Activated CD4-positive, alpha-beta T cell treated with anti-CD3 and anti-CD28 coated beads for 36 hours (primary cell): ENCODE measurements at regions of chrX and their contacts with region 1.

Region 1: DNA sequence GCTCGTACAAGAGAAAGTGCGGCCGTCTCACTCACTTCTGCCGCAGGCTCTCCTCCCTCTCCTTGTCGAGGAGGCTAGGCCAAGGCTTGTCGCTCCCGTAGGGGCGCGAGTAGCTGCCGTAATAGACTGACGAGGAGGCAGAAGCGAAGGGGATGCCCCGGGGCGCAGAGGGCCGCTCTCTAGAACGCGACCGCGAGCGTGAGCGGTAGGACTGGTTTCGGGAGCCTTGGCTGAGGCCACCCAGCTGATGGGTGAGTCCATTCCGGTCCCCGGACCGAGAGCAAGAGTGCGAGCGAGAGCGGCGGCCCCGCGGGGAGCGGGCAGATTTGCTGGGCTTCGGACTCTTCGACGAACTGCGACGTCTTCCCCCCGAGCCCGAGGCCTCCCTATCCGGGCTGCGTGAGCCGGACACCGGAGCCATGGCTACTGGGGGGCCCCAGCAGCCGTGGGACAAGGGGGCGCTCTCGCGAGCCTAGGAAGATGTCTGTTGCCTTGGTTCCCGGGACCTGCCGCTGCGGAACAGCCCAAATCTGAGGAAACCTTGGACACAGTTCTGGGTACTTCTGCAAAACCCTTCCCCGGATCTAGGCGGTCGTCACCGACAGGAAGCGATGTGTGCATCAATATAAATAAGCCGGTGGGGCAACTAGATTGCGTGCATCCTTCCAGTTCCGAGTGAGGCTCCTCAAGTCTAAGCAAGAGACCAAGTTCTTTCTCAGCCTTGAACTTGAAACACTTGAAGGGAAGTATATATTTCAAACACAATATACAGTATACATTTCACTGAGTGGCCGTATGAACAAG is at the start of gene NKAP:
- DNase-seq: peak; percentile 84
- ATAC-seq: peak; percentile 89
- H3K4me3 Mint-ChIP-seq: peak within 1 kb of the TSS; percentile 99
- H3K27ac Mint-ChIP-seq: peak within 1 kb of the TSS; percentile 98
- H3K4me1 Mint-ChIP-seq: peaks cover 20% of the 10 kb centered on the region
- H3K27me3 Mint-ChIP-seq: peaks cover under 1% of the 10 kb centered on the region
- total RNA-seq, gene NKAP: 11.8 to 12.2 TPM

Region 2: GRCh38 chrX:119574394-119575266 is 368.8 kb before region 1 on chrX and contains the start of gene UBE2A:
- CTCF ChIA-PET with region 1: no interaction called
- POLR2A ChIA-PET with region 1: no interaction called
- intact Hi-C with region 1: loop called in 1 of 2 experiments (anchors 5 kb)
- DNase-seq: peak; percentile 92
- ATAC-seq: peak; percentile 92
- H3K4me3 Mint-ChIP-seq: peak within 1 kb of the TSS; percentile 94
- H3K27ac Mint-ChIP-seq: peak within 1 kb of the TSS; percentile 87
- H3K4me1 Mint-ChIP-seq: peaks cover 24% of the 10 kb centered on the region
- H3K27me3 Mint-ChIP-seq: no peaks in the 10 kb centered on the region
- total RNA-seq, gene UBE2A: 49.2 to 67.9 TPM

Region 3: GRCh38 chrX:119852382-119853353 is 90.7 kb before region 1 on chrX and contains the start of gene UPF3B:
- CTCF ChIA-PET with region 1: no interaction called
- POLR2A ChIA-PET with region 1: no interaction called
- intact Hi-C with region 1: loop called in 1 of 2 experiments (anchors 1 kb)
- DNase-seq: peak; percentile 96
- ATAC-seq: peak; percentile 98
- H3K4me3 Mint-ChIP-seq: peak within 1 kb of the TSS; percentile 84
- H3K27ac Mint-ChIP-seq: peak within 1 kb of the TSS; percentile 93
- H3K4me1 Mint-ChIP-seq: peaks cover 4% of the 10 kb centered on the region
- H3K27me3 Mint-ChIP-seq: no peaks in the 10 kb centered on the region
- total RNA-seq, gene UPF3B: 18.1 to 21.3 TPM

Region 4: DNA sequence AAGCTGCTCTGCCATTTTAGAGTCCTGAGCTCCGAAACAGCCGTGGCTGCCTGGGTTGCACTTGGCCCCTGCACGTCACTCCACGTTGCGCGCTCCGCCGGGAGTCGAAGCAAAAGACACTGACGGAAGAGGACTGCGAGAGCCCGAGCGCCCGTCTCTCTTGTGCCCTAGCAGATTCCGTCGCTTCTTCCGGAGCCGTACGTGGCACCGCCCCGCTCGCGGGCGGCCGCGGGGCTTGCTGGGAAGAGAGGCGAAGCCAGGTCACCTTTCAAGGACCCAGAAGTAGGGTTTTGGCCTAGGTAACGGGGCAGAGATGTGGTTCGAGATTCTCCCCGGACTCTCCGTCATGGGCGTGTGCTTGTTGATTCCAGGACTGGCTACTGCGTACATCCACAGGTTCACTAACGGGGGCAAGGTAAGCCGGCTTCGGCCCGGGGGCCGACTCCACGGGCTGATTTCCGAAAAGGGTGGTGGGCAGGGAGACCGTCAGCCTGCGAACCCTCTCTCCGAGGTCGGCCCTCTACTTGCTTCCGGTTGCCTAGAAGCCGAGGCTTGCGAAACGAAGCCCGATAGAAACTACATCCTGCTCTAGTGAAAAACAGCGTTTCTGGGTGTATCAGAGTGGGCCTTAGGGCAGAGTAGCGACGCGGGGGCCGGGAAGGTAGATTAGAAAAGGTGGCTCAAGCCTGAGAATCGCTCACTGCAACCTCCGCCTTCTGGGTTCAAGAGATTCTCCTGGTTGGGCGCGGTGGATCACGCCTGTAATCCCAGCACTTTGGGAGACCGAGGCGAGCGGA is 71.6 kb before region 1 on chrX and contains the starts of genes NDUFA1 and RNF113A:
- CTCF ChIA-PET with region 1: no interaction called
- POLR2A ChIA-PET with region 1: no interaction called
- intact Hi-C with region 1: loop called in 1 of 2 experiments (anchors 1 kb)
- DNase-seq: peak; percentile 91
- ATAC-seq: peak; percentile 93
- H3K4me3 Mint-ChIP-seq: peak within 1 kb of the TSS; percentile 100
- H3K27ac Mint-ChIP-seq: peak within 1 kb of the TSS; percentile 99
- H3K4me1 Mint-ChIP-seq: peaks cover 14% of the 10 kb centered on the region
- H3K27me3 Mint-ChIP-seq: no peaks in the 10 kb centered on the region
- total RNA-seq, gene NDUFA1: 37.6 to 101 TPM
- total RNA-seq, gene RNF113A: 26.9 to 29.9 TPM

Region 5: GRCh38 chrX:120029354-120029753 is 86.0 kb after region 1 on chrX:
- CTCF ChIA-PET with region 1: no interaction called
- POLR2A ChIA-PET with region 1: no interaction called
- intact Hi-C with region 1: no loop called
- DNase-seq: no peak
- ATAC-seq: no peak
- H3K4me3 Mint-ChIP-seq: no peak overlapping the region
- H3K27ac Mint-ChIP-seq: no peak overlapping the region
- H3K4me1 Mint-ChIP-seq: no peaks in the 10 kb centered on the region
- H3K27me3 Mint-ChIP-seq: peaks cover 3% of the 10 kb centered on the region

Region 6: GRCh38 chrX:120244735-120245498 is 301.5 kb after region 1 on chrX:
- CTCF ChIA-PET with region 1: interaction called, 3 read pairs
- POLR2A ChIA-PET with region 1: no interaction called
- intact Hi-C with region 1: loop called (anchors 1 to 2 kb)
- DNase-seq: peak; percentile 74
- ATAC-seq: peak; percentile 84
- H3K4me3 Mint-ChIP-seq: peak overlapping the region; percentile 82
- H3K27ac Mint-ChIP-seq: peak overlapping the region; percentile 92
- H3K4me1 Mint-ChIP-seq: peaks cover 24% of the 10 kb centered on the region
- H3K27me3 Mint-ChIP-seq: no peaks in the 10 kb centered on the region

Region 7: GRCh38 chrX:120250522-120251271 is 307.3 kb after region 1 on chrX and contains the start of gene ZBTB33:
- CTCF ChIA-PET with region 1: interaction called, 3 read pairs
- POLR2A ChIA-PET with region 1: no interaction called
- intact Hi-C with region 1: loop called (anchors 1 to 2 kb)
- DNase-seq: peak; percentile 92
- ATAC-seq: peak; percentile 99
- H3K4me3 Mint-ChIP-seq: peak within 1 kb of the TSS; percentile 94
- H3K27ac Mint-ChIP-seq: peak within 1 kb of the TSS; percentile 92
- H3K4me1 Mint-ChIP-seq: peaks cover 22% of the 10 kb centered on the region
- H3K27me3 Mint-ChIP-seq: no peaks in the 10 kb centered on the region
- total RNA-seq, gene ZBTB33: 14.5 to 14.6 TPM

Region 8: DNA sequence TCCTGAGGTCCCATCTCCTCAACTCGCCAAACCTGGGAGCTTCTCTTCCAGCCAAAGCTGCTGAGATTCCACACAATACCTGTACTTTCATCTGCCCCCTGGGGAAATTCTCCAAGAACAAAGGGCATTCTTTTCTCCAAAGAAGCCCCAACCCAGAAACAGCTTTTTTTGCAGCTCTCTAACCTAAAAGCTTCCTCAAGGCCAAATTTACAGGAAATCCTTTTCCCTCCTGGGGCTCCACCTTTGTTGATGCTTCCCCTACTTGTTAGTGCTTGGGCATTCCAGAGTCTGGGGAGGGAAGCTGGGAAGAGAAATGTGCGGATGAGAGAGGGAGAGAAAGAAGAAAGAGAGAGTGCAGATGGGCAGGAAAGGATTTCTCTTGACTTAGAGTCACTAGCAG is 331.6 kb after region 1 on chrX:
- CTCF ChIA-PET with region 1: no interaction called
- POLR2A ChIA-PET with region 1: no interaction called
- intact Hi-C with region 1: no loop called
- DNase-seq: no peak
- ATAC-seq: no peak
- H3K4me3 Mint-ChIP-seq: no peak overlapping the region
- H3K27ac Mint-ChIP-seq: no peak overlapping the region
- H3K4me1 Mint-ChIP-seq: peaks cover under 1% of the 10 kb centered on the region
- H3K27me3 Mint-ChIP-seq: no peaks in the 10 kb centered on the region